GM12878 (cell line): ENCODE measurements at regions of chr4 and their contacts with region 1.

Region 1: DNA sequence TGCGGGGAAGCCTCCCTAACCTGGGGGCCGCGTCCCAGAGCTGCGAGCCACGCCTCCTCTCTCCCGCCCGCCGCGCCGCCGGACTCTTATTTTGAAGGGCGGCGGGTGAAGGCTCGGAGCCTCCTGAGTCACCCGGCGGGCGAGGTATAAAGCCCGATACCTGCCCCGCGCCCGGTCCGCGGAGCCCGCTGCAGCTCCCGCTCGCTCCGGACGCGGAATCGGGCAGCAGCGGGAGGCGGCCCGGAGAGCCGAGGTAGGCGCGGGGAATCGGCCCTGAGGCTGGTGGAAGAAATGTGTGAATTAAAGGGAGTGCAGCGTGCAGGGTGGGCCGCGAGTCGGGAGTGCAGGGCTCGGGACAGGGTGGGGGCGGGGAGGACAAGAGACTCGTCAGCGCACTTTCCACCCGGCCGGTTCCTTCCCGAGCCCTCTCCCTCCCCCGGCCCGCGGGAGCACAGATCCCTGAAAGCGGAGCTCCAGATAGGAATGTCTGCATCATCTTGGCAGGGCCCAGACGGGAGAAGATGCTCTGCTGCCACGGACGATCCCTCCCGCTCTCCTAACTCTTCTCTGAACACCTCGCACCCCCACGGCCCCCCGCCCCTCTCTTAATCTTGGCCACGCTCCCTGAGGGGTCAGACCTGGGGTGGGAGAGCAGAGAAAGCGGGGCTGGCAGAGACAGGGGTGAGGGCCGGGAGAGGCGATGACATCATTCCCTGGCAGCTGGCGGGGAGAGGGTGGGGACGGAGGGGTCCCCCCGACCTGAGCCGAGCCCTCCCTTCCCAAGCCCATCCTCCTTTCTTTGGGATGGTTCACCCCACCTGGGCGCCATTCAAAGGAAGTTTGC is 177.9 kb downstream of the CBR4 start:
- DNase-seq: no peak
- ATAC-seq: peak; percentile 91
- H3K4me3 ChIP-seq: peak overlapping the region; percentile 59; the same call in 1 of the 2 replicates
- H3K27ac ChIP-seq: no peak overlapping the region
- H3K4me1 ChIP-seq: no peaks in the 10 kb centered on the region
- H3K27me3 ChIP-seq: peaks cover 2 to 14% of the 10 kb centered on the region in 2 experiments; a peak in 3 of 4 replicates
- CTCF ChIP-seq: no peak
- EP300 ChIP-seq: no peak; a peak in 1 of 4 replicates
- POLR2A ChIP-seq: no peak
- RAD21 ChIP-seq: no peak

Region 2: DNA sequence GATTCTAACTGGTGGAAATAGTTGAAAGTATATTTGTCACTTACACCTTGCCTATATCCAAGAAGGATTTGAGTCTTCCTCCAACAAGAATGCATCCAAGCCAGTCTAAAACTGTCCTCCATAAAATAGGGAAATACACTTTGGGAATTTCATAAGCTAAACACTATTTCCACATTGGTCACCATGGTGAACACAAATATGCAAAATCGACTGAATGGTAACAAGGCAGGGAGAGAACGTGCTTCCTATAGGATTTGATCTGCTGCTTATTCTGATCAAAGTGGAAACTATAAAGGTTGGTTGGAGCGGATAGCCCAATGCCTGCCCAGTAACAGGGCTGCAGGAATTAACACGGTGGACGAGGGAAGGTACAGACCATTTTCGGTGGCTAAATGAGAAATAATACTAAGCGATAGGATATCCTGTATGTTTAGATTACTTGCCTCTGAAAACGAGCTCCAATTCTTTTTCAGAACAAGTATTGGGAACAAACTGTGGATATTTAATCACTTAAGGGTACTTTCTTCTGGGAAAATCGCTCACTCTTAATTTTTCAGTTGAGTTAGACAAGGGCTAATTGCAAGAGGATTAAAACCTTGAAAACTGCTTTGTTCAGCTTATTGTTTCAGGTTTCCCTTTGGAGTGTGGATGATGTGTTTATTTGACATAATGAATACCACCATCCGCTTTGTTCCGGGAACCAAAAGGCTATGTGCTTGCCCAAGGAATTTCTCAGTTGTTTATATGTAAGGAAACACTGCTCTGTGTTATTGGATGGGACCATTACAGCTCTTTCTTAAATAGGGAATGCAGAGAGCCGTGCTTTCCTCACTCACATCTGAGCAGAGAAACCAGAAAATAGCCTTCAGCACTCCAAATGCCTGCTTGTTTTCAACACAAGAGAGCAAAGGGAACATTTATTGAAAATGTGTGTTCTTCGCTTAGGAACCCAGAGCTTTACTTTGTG is 16.5 kb before region 1 on chr4:
- CTCF ChIA-PET with region 1: interaction called, 11 read pairs
- POLR2A ChIA-PET with region 1: interaction called, 9 read pairs
- RAD21 ChIA-PET with region 1: interaction called, 19 read pairs
- SMC1A ChIA-PET with region 1: interaction called, 105 read pairs
- in situ Hi-C with region 1: no loop called
- intact Hi-C with region 1: loop called (anchors 1 kb)
- DNase-seq: no peak
- ATAC-seq: no peak
- H3K4me3 ChIP-seq: no peak overlapping the region
- H3K27ac ChIP-seq: no peak overlapping the region
- H3K4me1 ChIP-seq: no peaks in the 10 kb centered on the region
- H3K27me3 ChIP-seq: peaks cover 2 to 8% of the 10 kb centered on the region in 2 experiments; a peak in 3 of 4 replicates
- CTCF ChIP-seq: no peak
- EP300 ChIP-seq: no peak
- POLR2A ChIP-seq: no peak
- RAD21 ChIP-seq: no peak